ENCODE measurements at regions of chr2 and their contacts with region 1.

Region 1: DNA sequence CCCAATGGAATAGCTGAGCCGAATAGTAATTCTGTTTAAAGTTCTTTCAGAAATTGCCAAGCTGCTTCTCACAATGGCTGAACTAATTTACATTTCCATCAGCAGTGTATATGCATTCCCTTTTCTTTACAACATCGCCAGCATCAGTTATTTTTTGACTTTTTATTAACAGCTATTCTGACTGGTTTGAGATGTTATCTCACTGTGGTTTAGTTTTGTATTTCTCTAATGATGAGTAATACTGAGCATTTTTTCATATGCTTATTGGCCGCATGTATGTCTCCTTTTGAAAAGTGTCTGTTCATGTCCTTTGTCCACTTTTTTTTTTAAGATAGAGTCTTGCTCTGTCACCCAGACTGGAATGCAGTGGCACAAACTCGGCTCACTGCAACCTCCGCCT is 100.7 kb downstream of the C2orf74 start:
- DNase-seq: no peak
- H3K4me3 ChIP-seq: no peak overlapping the region
- H3K27ac ChIP-seq: no peak overlapping the region
- H3K4me1 ChIP-seq: no peaks in the 10 kb centered on the region
- H3K27me3 ChIP-seq: no peaks in the 10 kb centered on the region
- CTCF ChIP-seq: no peak
- POLR2A ChIP-seq: no peak

Region 2: GRCh38 chr2:59529726-59530125 is 1733.0 kb before region 1 on chr2:
- intact Hi-C with region 1: no loop called
- DNase-seq: no peak
- H3K4me3 ChIP-seq: no peak overlapping the region
- H3K27ac ChIP-seq: no peak overlapping the region
- H3K4me1 ChIP-seq: no peaks in the 10 kb centered on the region
- H3K27me3 ChIP-seq: no peaks in the 10 kb centered on the region
- CTCF ChIP-seq: no peak
- POLR2A ChIP-seq: no peak

Region 3: DNA sequence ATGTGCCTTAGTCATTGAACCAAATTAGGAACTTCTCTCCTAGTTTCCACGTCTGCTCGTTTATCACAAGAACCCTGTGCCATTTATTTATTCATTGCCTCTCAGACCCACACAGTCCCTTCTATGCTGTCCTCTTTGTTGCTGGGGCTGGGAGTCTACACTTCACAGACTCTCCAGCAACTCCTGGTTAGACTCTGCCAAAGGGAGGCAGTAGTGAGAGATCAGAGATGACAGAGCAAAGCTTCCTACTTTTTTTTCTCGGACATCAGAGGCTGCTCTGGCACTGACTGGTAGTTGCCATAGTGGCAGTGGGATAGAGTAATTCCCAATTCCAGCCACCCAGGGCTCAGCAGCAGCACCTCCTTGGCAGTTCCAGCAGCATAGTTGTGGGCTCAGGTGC is 986.7 kb before region 1 on chr2:
- intact Hi-C with region 1: no loop called
- DNase-seq: no peak
- H3K4me3 ChIP-seq: no peak overlapping the region
- H3K27ac ChIP-seq: no peak overlapping the region
- H3K4me1 ChIP-seq: no peaks in the 10 kb centered on the region
- H3K27me3 ChIP-seq: no peaks in the 10 kb centered on the region
- CTCF ChIP-seq: no peak
- POLR2A ChIP-seq: no peak

Region 4: DNA sequence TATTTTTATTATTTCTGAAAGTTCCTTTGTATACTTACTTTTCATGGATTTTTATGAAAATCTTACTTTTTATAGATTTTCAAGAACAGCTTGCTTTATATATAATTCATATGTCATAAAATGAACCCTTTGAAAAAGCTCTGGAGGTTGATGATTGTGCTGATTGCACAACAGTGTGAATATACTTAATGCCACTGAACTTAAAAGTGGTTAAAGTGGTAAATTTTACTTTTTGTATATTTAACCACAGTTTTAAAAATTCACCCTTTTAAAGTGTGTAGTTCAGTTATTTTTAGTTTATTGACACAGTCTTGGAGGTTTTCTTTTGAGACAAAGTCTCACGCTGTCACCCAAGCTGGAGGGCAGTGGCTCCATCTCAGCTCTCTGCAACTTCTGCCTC is 188.6 kb before region 1 on chr2:
- intact Hi-C with region 1: no loop called
- DNase-seq: no peak
- H3K4me3 ChIP-seq: no peak overlapping the region
- H3K27ac ChIP-seq: no peak overlapping the region
- H3K4me1 ChIP-seq: no peaks in the 10 kb centered on the region
- H3K27me3 ChIP-seq: no peaks in the 10 kb centered on the region
- CTCF ChIP-seq: no peak
- POLR2A ChIP-seq: no peak

Region 5: DNA sequence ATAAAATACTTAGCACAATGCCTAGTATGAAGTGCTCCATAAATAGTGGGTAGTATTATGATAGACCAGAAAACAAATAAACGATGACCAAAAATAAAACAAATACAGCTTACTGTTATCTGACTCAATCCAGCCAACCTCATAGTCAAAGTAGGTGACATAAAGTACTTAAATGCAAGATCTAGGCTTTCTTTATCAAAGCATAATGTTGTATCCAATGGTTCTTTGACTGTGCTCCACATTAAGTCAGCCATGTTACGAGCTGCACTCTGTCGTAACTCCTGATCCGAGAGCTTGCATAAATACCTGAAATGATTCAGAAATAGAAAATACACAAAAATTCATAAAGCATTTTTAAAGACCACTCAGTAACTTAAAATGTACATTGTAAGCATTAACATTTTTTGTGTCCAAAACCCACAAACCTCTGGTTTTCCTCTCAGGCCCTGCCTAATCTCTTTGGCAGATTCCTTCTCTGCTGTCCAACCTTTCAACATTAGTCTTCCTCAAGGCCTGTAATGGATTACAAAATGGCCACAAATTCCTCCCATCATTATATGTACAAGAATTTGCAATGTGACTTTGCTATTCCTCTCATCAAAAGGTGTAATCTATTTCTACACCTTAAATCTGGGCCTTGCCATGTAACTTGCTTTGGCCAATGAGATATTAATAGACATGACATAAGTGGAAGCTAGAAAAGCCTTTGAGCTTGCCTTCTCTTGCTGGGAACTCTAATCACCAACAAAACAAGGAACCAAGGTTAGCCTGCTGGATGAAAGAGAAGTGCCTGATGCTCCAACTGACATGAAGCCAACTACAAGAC is 117.6 kb after region 1 on chr2:
- intact Hi-C with region 1: loop called (anchors 10 kb)
- DNase-seq: no peak
- H3K4me3 ChIP-seq: no peak overlapping the region
- H3K27ac ChIP-seq: no peak overlapping the region
- H3K4me1 ChIP-seq: no peaks in the 10 kb centered on the region
- H3K27me3 ChIP-seq: no peaks in the 10 kb centered on the region
- CTCF ChIP-seq: no peak
- POLR2A ChIP-seq: no peak

Measured in breast epithelium (tissue), 4 donors.